ENCODE measurements at regions of chr13 and their contacts with region 1.

Region 1: DNA sequence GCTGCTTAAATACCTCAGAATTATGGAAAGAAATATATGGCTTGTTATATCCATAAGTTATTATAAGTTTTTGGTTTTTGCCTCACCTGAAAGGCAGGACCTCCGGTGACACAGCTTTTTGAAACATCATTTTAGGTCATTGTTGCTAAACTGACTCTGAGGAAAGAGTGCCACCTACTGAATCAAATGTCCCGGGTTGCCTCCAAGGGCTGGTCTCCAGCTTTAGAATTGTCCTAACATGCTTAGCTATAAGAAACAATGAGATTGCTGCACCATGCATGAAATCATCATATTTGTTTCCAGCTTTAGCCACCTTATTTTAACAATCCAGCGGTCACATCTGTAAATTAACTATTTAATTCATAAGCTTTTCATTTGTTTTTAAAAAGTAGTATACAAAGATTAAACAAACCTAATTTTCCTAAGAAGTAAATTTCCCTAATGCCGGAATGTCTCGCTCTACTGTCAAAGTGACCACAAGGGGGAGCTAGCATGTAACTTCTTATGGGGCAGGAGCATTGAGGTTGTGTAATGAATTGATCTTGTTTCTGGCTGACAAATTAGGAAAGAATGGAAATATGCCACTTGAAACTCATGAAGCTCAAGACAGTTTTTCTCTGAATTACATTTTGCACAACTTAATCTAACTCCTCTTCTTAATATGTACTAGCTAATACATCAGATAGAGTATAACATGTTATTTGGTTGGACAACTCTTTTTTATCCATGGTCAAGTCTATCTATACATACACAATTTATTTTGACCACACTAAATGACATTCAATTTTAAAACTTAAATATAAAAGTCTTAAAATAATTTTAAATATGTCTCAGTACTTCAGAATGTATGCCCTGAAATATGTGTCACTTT is 6.7 kb upstream of the PCDH17 start:
- DNase-seq: no peak
- ATAC-seq: peak; percentile 72
- H3K4me3 ChIP-seq: no peak overlapping the region
- H3K27ac ChIP-seq: no peak overlapping the region
- H3K4me1 ChIP-seq: no peaks in the 10 kb centered on the region
- H3K27me3 ChIP-seq: no peaks in the 10 kb centered on the region
- CTCF ChIP-seq: peak; percentile 59 to 74 (median 68)
- EP300 ChIP-seq: no peak
- POLR2A ChIP-seq: no peak
- RAD21 ChIP-seq: peak; percentile 65

Region 2: DNA sequence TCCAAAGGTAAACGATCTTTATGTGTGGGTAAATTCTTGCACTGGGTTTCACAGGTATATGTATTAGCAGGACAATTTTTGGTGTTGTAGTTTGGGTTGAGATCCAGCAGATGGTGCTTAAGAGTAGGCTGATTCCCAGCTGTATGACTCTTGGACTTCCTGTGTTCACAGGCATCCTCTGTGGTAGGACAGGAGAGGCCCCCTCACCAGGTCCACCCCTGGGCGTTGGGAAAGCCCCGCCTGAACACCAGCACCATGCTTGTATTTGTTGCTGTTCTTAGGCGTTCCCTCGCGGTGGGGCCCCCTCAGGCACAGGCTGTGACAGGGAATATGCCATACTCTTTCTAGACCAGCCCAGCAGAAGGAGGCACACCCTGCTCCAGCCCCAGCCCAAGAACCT is 42.8 kb before region 1 on chr13:
- CTCF ChIA-PET with region 1: interaction called, 117 read pairs
- POLR2A ChIA-PET with region 1: interaction called, 12 read pairs
- RAD21 ChIA-PET with region 1: interaction called, 102 read pairs
- SMC1A ChIA-PET with region 1: interaction called, 110 read pairs
- in situ Hi-C with region 1: no loop called
- intact Hi-C with region 1: no loop called
- DNase-seq: no peak
- ATAC-seq: peak; percentile 58
- H3K4me3 ChIP-seq: no peak overlapping the region
- H3K27ac ChIP-seq: no peak overlapping the region
- H3K4me1 ChIP-seq: no peaks in the 10 kb centered on the region
- H3K27me3 ChIP-seq: no peaks in the 10 kb centered on the region
- CTCF ChIP-seq: peak in 1 of 3 experiments; percentile 13; a peak in 1 of 6 replicates
- EP300 ChIP-seq: no peak
- POLR2A ChIP-seq: no peak
- RAD21 ChIP-seq: no peak

Region 3: GRCh38 chr13:57601536-57601935 is 23.3 kb before region 1 on chr13:
- CTCF ChIA-PET with region 1: interaction called, 19 read pairs
- POLR2A ChIA-PET with region 1: no interaction called
- RAD21 ChIA-PET with region 1: interaction called, 17 read pairs
- SMC1A ChIA-PET with region 1: interaction called, 13 read pairs
- in situ Hi-C with region 1: no loop called
- intact Hi-C with region 1: no loop called
- DNase-seq: no peak
- ATAC-seq: no peak
- H3K4me3 ChIP-seq: no peak overlapping the region
- H3K27ac ChIP-seq: no peak overlapping the region
- H3K4me1 ChIP-seq: no peaks in the 10 kb centered on the region
- H3K27me3 ChIP-seq: no peaks in the 10 kb centered on the region
- CTCF ChIP-seq: no peak
- EP300 ChIP-seq: no peak
- POLR2A ChIP-seq: no peak
- RAD21 ChIP-seq: no peak

Region 4: GRCh38 chr13:57716295-57716694 is 91.5 kb after region 1 on chr13:
- CTCF ChIA-PET with region 1: interaction called, 76 read pairs
- POLR2A ChIA-PET with region 1: no interaction called
- RAD21 ChIA-PET with region 1: interaction called, 12 read pairs
- SMC1A ChIA-PET with region 1: interaction called, 60 read pairs
- in situ Hi-C with region 1: no loop called
- intact Hi-C with region 1: loop called (anchors 2 kb)
- DNase-seq: no peak
- ATAC-seq: no peak
- H3K4me3 ChIP-seq: no peak overlapping the region
- H3K27ac ChIP-seq: no peak overlapping the region
- H3K4me1 ChIP-seq: no peaks in the 10 kb centered on the region
- H3K27me3 ChIP-seq: no peaks in the 10 kb centered on the region
- CTCF ChIP-seq: no peak; a peak in 1 of 6 replicates
- EP300 ChIP-seq: no peak
- POLR2A ChIP-seq: no peak
- RAD21 ChIP-seq: no peak

Region 5: DNA sequence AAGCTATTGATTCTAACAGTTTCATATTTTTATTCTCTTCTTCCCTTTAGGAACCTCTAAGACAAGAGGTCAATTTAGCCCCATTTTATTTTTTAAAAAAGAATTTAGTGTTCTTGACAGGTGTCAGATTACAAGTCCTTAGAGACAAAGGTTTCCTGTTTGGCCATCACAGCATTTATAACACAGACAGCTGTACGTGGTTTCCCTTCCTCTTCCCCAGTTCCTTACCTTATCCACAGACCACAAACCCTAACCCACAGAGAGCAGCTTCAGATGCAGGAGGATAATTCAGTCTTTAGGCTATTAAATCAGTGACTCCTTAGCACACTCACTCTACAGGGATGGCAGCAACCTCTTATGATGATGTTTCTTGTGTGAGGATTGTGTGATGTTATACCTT is 1328.8 kb after region 1 on chr13:
- CTCF ChIA-PET with region 1: interaction called, 42 read pairs
- POLR2A ChIA-PET with region 1: no interaction called
- RAD21 ChIA-PET with region 1: interaction called, 4 read pairs
- SMC1A ChIA-PET with region 1: interaction called, 5 read pairs
- in situ Hi-C with region 1: loop called (anchors 25 kb)
- intact Hi-C with region 1: no loop called
- DNase-seq: peak; percentile 87
- ATAC-seq: peak; percentile 76
- H3K4me3 ChIP-seq: no peak overlapping the region
- H3K27ac ChIP-seq: peak overlapping the region; percentile 18; the same call in 1 of the 2 replicates
- H3K4me1 ChIP-seq: no peaks in the 10 kb centered on the region; the same call in 1 of the 2 replicates
- H3K27me3 ChIP-seq: no peaks in the 10 kb centered on the region
- CTCF ChIP-seq: no peak
- EP300 ChIP-seq: peak; percentile 99
- POLR2A ChIP-seq: no peak
- RAD21 ChIP-seq: no peak

Region 6: DNA sequence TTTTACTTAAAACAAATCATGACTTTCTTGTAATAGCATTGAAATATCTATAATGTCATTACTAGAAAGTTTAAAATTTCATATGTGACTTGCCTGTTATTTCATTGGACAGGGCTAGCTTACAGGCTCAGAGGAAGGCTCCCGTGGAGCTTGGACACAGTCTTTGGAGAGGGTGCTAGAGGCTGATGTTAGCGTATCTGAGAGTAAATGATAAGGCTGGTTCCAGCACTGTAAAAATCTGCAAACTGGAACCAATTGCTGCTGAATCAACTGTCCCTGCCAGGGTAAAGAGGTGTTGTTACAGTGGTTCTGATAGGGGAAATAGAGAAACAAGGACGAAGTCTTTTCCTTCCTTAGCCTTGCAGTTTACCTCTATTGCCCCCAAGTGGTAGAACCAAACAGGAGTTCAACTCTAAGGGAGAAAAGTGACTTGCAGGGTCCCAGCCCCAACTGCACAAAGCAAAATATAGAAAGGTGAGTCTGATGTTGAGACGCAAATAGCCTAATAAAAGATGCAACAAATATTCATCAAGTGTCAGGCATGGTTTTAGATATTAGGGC is 1637.2 kb after region 1 on chr13:
- CTCF ChIA-PET with region 1: interaction called, 22 read pairs
- POLR2A ChIA-PET with region 1: no interaction called
- RAD21 ChIA-PET with region 1: interaction called, 9 read pairs
- SMC1A ChIA-PET with region 1: interaction called, 10 read pairs
- in situ Hi-C with region 1: no loop called
- intact Hi-C with region 1: loop called (anchors 2 kb)
- DNase-seq: no peak
- ATAC-seq: peak; percentile 41; the same call in 2 of the 3 replicates
- H3K4me3 ChIP-seq: no peak overlapping the region
- H3K27ac ChIP-seq: no peak overlapping the region
- H3K4me1 ChIP-seq: no peaks in the 10 kb centered on the region
- H3K27me3 ChIP-seq: no peaks in the 10 kb centered on the region
- CTCF ChIP-seq: peak; percentile 17 to 43 (median 39); a peak in 4 of 6 replicates
- EP300 ChIP-seq: no peak
- POLR2A ChIP-seq: no peak
- RAD21 ChIP-seq: peak; percentile 18; the same call in 1 of the 2 replicates

Measured in GM12878 (cell line).